Activated CD8-positive, alpha-beta memory T cell treated with anti-CD3 and anti-CD28 coated beads, Interleukin-2, amount 10 ng/mL, durations not matched to agents 7 days and 5 days (primary cell): ENCODE measurements at regions of chr16 and their contacts with region 1.

Region 1: GRCh38 chr16:30091474-30092372 is at the start of gene TBX6:
- DNase-seq: peak; percentile 97
- ATAC-seq: peak; percentile 86
- H3K4me3 Mint-ChIP-seq: peak within 1 kb of the TSS; percentile 84
- H3K27ac Mint-ChIP-seq: peak within 1 kb of the TSS; percentile 96
- H3K4me1 Mint-ChIP-seq: peaks cover 53% of the 10 kb centered on the region
- H3K27me3 Mint-ChIP-seq: no peaks in the 10 kb centered on the region
- total RNA-seq, gene TBX6: 2.0 to 2.9 TPM

Region 2: GRCh38 chr16:29943846-29944669 is 147.7 kb before region 1 on chr16:
- CTCF ChIA-PET with region 1: no interaction called
- DNase-seq: no peak
- ATAC-seq: no peak
- H3K4me3 Mint-ChIP-seq: no peak overlapping the region
- H3K27ac Mint-ChIP-seq: no peak overlapping the region
- H3K4me1 Mint-ChIP-seq: no peaks in the 10 kb centered on the region
- H3K27me3 Mint-ChIP-seq: peaks cover 6% of the 10 kb centered on the region

Region 3: DNA sequence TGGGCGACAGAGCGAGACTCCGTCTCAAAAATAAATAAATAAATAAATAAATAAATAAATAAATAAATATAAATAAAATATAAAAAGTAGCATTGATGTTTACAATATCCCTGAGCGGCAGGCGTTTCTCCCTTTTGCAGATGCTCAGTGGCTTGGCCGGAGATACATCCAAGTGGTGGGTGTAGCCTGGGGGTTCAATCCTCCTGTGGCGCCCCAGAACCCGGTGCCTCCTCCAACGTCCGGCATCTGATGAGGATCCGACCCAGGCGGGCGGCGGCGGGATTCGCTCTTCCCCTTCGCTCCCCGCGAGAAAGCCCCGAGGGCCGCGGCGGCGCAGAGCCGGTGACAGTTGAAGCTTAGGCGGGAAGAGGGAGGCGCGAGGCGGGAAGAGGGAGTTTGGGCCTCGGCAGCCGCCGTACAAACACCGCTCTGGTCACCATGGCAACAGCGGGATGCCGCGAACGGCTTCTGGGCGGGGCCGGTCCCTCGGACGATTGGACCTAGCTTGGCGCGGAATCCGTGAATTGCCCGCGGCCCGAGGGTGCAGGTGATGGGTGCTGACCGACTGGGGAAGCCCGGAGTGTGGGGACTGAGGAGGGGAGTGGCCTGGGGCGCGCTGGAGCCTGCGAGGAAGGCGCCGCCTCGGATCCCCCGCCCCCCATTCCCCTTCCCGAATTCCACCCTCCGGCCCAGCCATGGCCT is 38.9 kb before region 1 on chr16:
- CTCF ChIA-PET with region 1: interaction called, 29 read pairs
- DNase-seq: peak; percentile 95
- ATAC-seq: peak; percentile 81
- H3K4me3 Mint-ChIP-seq: peak overlapping the region; percentile 80
- H3K27ac Mint-ChIP-seq: peak overlapping the region; percentile 78
- H3K4me1 Mint-ChIP-seq: peaks cover 29% of the 10 kb centered on the region
- H3K27me3 Mint-ChIP-seq: no peaks in the 10 kb centered on the region

Region 4: DNA sequence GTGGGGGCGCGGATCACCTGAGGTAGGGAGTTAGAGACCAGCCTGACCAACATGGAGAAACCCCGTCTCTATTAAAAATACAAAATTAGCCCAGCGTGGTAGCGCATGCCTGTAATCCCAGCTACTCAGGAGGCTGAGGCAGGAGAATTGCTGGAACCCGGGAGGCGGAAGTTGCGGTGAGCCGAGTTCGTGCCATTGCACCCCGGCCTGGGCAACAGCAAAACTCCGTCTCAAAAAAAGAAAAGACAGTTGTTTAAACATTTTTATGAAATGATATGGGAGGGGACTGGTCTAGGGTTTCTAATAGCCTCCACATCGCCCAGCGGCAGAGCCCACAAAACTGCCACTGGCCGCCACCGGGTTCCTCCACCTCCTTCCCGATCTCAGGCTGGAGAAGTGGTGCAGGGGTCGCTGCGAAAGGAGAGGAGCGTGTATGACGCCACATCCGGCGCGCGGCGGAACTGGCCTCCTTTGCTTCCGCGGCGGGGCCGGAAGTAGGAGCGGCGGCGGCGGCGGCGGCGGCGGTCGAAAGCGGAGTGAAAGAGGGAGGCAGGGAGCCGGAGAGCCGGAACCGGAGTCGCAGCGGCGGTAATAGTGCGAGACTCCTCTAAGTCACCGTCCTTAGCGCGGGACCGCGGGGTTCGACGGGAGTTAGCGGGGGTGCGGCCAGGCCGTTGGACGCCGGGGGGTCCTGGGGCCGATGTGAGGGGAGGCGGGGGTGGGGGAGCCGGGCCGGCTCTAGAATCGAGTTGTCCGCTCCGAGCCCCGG is 16.0 kb before region 1 on chr16 and contains the start of gene PPP4C:
- CTCF ChIA-PET with region 1: interaction called, 107 read pairs
- DNase-seq: peak; percentile 95
- ATAC-seq: peak; percentile 90
- H3K4me3 Mint-ChIP-seq: peak within 1 kb of the TSS; percentile 85
- H3K27ac Mint-ChIP-seq: peak within 1 kb of the TSS; percentile 87
- H3K4me1 Mint-ChIP-seq: peaks cover 37% of the 10 kb centered on the region
- H3K27me3 Mint-ChIP-seq: no peaks in the 10 kb centered on the region
- total RNA-seq, gene PPP4C: 149 to 161 TPM

Region 5: GRCh38 chr16:30112197-30113030 is 20.7 kb after region 1 on chr16:
- CTCF ChIA-PET with region 1: interaction called, 44 read pairs
- DNase-seq: peak; percentile 75
- ATAC-seq: peak; percentile 70
- H3K4me3 Mint-ChIP-seq: no peak overlapping the region
- H3K27ac Mint-ChIP-seq: no peak overlapping the region
- H3K4me1 Mint-ChIP-seq: peaks cover 11% of the 10 kb centered on the region
- H3K27me3 Mint-ChIP-seq: no peaks in the 10 kb centered on the region

Region 6: GRCh38 chr16:30142672-30143346 is 51.1 kb after region 1 on chr16:
- CTCF ChIA-PET with region 1: interaction called, 24 read pairs
- DNase-seq: peak; percentile 58
- ATAC-seq: peak; percentile 96
- H3K4me3 Mint-ChIP-seq: no peak overlapping the region
- H3K27ac Mint-ChIP-seq: peak overlapping the region; percentile 47
- H3K4me1 Mint-ChIP-seq: peaks cover 31% of the 10 kb centered on the region
- H3K27me3 Mint-ChIP-seq: no peaks in the 10 kb centered on the region